ENCODE measurements at regions of chr15 and their contacts with region 1.

Region 1: DNA sequence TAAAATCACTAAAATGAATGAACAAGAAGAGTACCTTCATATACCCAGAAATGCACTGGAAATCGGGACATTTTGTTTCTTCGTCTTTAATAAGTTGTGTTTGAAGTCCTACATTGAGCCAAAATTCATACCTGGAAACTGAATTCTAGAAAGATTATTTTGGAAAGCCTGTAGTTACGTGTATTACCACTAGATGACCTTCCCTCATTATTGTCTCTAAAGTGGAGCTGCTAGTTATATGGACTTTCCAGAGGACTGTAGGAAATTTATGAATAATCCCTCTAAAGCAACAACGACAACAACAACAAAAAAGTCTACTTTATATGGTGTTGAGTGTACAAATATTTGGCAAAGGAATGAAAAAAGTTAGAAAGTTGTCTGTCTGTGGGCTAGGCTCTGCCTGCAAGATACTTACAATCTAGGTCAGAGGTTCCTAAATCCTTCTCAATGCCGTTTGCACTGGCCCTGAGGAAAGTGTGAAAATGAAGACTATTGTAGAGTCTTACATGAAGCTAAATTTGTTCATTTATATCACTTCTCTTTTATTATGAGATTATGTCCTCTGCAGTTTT is 234.8 kb upstream of the NR2E3 start:
- DNase-seq: no peak
- ATAC-seq: no peak; the same call in 1 of the 2 replicates
- H3K4me3 ChIP-seq: no peak overlapping the region
- H3K27ac ChIP-seq: no peak overlapping the region
- H3K4me1 ChIP-seq: peaks cover 10 to 14% of the 10 kb centered on the region in 2 experiments; a peak in 3 of 4 replicates
- H3K27me3 ChIP-seq: no peaks in the 10 kb centered on the region
- CTCF ChIP-seq: peak; percentile 42 to 65 (median 54); a peak in 5 of 6 replicates
- POLR2A ChIP-seq: no peak
- RAD21 ChIP-seq: peak; percentile 64

Region 2: GRCh38 chr15:71386448-71387236 is 188.9 kb before region 1 on chr15:
- CTCF ChIA-PET with region 1: interaction called, 3 read pairs
- POLR2A ChIA-PET with region 1: no interaction called
- RAD21 ChIA-PET with region 1: no interaction called
- intact Hi-C with region 1: loop called (anchors 10 kb)
- DNase-seq: no peak
- ATAC-seq: no peak
- H3K4me3 ChIP-seq: no peak overlapping the region
- H3K27ac ChIP-seq: no peak overlapping the region
- H3K4me1 ChIP-seq: peaks cover 11 to 17% of the 10 kb centered on the region in 2 experiments
- H3K27me3 ChIP-seq: no peaks in the 10 kb centered on the region
- CTCF ChIP-seq: peak; percentile 12 to 49 (median 46); a peak in 4 of 6 replicates
- POLR2A ChIP-seq: no peak
- RAD21 ChIP-seq: peak; percentile 67

Region 3: DNA sequence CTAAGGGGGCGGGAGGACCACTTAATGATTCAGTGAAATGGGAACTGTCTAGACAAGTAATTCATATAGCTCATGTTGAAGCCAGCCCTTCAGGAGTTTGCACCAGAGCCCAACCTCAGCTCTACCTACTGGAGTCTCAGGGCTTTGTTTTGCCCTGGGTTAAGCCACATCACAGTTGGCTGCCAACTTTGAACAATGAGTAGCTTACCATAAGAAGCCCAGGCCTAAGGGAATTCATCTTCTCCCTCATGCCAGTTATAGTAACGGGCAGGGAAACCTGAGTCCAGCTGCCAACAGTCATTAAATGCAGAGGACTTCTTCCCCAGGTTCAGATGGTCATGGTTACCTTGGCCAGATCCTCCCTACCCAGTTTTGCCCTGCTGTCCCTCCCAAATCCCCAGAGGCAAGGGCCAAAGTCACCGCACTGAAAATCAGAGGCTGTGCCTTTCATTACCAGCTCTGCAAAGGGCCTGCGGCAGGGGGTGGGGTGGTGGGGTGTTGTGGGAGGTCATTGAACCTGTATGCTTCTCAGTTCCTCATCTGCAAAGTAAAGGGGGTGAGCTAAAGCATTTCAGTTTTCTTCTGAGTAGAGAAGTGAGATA is 67.4 kb before region 1 on chr15:
- CTCF ChIA-PET with region 1: no interaction called
- POLR2A ChIA-PET with region 1: no interaction called
- RAD21 ChIA-PET with region 1: no interaction called
- intact Hi-C with region 1: no loop called
- DNase-seq: no peak
- ATAC-seq: no peak
- H3K4me3 ChIP-seq: no peak overlapping the region
- H3K27ac ChIP-seq: no peak overlapping the region
- H3K4me1 ChIP-seq: no peaks in the 10 kb centered on the region
- H3K27me3 ChIP-seq: no peaks in the 10 kb centered on the region
- CTCF ChIP-seq: no peak
- POLR2A ChIP-seq: no peak
- RAD21 ChIP-seq: no peak

Region 4: DNA sequence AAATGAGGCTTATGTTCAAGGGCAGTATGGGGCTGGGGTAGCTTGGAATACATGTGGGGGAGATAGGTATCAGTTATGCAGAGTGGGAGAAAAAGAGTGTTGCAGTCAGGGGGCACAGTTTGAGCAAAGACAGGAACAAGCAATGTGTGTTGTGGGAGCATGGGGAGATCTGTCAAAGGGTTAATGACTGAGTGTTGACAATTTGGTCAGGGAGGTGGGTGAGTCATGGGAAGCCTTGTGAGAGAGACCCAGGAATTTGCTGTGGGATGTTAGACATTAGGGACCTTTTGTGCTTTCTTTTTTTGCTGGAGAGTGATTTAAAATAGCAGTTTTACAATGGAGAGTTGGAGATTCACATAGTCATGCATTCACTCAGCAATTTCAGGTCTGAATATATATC is 13.2 kb after region 1 on chr15:
- CTCF ChIA-PET with region 1: interaction called, 6 read pairs
- POLR2A ChIA-PET with region 1: no interaction called
- RAD21 ChIA-PET with region 1: no interaction called
- intact Hi-C with region 1: loop called (anchors 1 kb)
- DNase-seq: no peak
- ATAC-seq: peak; percentile 77
- H3K4me3 ChIP-seq: no peak overlapping the region
- H3K27ac ChIP-seq: no peak overlapping the region
- H3K4me1 ChIP-seq: peaks cover 6 to 7% of the 10 kb centered on the region in 2 experiments; a peak in 3 of 4 replicates
- H3K27me3 ChIP-seq: no peaks in the 10 kb centered on the region
- CTCF ChIP-seq: no peak
- POLR2A ChIP-seq: no peak
- RAD21 ChIP-seq: no peak

Region 5: GRCh38 chr15:71730277-71731144 is 155.0 kb after region 1 on chr15:
- CTCF ChIA-PET with region 1: interaction called, 3 read pairs
- POLR2A ChIA-PET with region 1: no interaction called
- RAD21 ChIA-PET with region 1: no interaction called
- intact Hi-C with region 1: loop called (anchors 5 kb)
- DNase-seq: peak; percentile 43
- ATAC-seq: peak; percentile 96
- H3K4me3 ChIP-seq: no peak overlapping the region
- H3K27ac ChIP-seq: no peak overlapping the region
- H3K4me1 ChIP-seq: no peaks in the 10 kb centered on the region
- H3K27me3 ChIP-seq: no peaks in the 10 kb centered on the region; the same call in 1 of the 2 replicates
- CTCF ChIP-seq: peak; percentile 70 to 82 (median 75)
- POLR2A ChIP-seq: no peak
- RAD21 ChIP-seq: peak; percentile 71

Region 6: GRCh38 chr15:71743861-71744382 is 168.4 kb after region 1 on chr15:
- CTCF ChIA-PET with region 1: interaction called, 10 read pairs
- POLR2A ChIA-PET with region 1: no interaction called
- RAD21 ChIA-PET with region 1: no interaction called
- intact Hi-C with region 1: no loop called
- DNase-seq: no peak
- ATAC-seq: no peak
- H3K4me3 ChIP-seq: no peak overlapping the region
- H3K27ac ChIP-seq: no peak overlapping the region
- H3K4me1 ChIP-seq: peaks cover 27 to 33% of the 10 kb centered on the region in 2 experiments
- H3K27me3 ChIP-seq: no peaks in the 10 kb centered on the region
- CTCF ChIP-seq: peak; percentile 57 to 78 (median 64); a peak in 5 of 6 replicates
- POLR2A ChIP-seq: no peak
- RAD21 ChIP-seq: peak; percentile 71

Region 7: DNA sequence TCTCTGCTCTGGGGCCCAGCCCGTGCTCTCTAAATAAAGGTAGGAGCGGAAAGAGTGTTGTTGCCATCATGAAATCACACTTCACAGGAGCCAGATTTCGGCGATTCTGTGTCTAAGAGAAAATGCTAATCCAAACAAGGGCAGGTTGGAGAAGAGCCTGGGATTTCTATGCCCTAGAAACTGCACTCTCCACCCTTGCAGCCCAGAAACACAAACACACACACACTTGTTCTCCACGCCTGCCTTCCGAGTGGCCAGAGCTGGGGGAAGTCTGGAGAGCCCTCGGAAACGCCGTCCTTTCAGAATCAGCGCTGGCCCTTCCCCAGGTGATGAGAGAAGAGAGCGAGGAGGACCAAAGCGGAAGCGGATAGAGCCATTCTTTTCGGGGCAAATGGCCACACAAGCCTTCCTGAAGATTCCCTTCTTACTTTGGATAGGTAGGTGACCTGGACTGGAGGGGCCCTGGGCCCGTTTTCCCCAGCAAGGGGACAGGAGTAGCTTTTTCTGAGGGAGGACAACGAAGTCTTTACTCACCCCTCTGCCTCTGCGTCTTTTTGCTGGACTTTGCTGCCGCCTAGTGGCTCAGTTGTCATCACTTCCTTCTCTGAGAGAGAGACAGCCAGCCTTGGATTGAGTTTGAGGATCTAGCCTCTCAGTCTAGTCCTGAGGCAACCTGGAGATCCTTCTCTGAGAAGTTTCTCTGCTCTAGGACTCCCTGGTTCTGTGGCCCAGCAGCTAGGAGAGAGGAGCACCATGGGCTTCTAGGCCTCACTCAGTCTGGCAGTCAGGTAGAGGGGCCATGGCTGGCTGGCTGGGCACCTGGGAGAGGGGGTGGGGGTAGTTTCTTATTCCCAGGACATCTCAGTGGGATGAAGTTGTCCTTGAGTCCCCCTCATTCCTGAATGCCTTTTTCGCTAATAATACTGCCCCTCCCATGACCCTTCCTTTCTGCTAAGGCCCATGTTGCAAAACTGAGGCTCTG is 580.4 kb after region 1 on chr15:
- CTCF ChIA-PET with region 1: interaction called, 3 read pairs
- POLR2A ChIA-PET with region 1: no interaction called
- RAD21 ChIA-PET with region 1: no interaction called
- intact Hi-C with region 1: loop called (anchors 5 kb)
- DNase-seq: peak; percentile 59
- ATAC-seq: peak; percentile 99
- H3K4me3 ChIP-seq: no peak overlapping the region
- H3K27ac ChIP-seq: no peak overlapping the region
- H3K4me1 ChIP-seq: peaks cover 4 to 12% of the 10 kb centered on the region in 2 experiments; a peak in 3 of 4 replicates
- H3K27me3 ChIP-seq: no peaks in the 10 kb centered on the region
- CTCF ChIP-seq: peak; percentile 74 to 92 (median 84); a peak in 5 of 6 replicates
- POLR2A ChIP-seq: no peak
- RAD21 ChIP-seq: peak; percentile 95